AG04450 (cell line): ENCODE measurements at regions of chr1 and their contacts with region 1.

Region 1: DNA sequence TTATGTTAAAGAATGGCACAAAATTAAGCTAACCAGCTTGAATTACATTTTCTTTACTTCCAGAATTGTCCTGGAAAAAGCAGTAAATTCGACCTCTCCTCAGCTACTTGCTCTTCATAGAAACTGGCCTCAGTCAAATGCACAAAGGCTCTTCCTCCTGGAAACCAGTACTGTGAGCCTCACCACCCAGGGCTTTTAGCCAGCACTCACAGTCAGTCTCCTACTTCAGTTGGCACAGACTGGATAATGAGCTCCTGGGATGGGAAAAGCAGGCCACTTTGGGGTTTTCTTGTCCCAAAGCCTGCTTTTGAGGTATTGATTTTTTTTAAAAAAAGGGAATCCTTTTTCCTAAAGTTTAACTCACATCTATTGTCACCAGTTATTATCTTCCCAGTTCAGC is 40.4 kb downstream of the SCYL3 start:
- DNase-seq: no peak
- H3K4me3 ChIP-seq: no peak overlapping the region
- H3K27ac ChIP-seq: no peak overlapping the region
- H3K27me3 ChIP-seq: no peaks in the 10 kb centered on the region
- CTCF ChIP-seq: no peak

Region 2: DNA sequence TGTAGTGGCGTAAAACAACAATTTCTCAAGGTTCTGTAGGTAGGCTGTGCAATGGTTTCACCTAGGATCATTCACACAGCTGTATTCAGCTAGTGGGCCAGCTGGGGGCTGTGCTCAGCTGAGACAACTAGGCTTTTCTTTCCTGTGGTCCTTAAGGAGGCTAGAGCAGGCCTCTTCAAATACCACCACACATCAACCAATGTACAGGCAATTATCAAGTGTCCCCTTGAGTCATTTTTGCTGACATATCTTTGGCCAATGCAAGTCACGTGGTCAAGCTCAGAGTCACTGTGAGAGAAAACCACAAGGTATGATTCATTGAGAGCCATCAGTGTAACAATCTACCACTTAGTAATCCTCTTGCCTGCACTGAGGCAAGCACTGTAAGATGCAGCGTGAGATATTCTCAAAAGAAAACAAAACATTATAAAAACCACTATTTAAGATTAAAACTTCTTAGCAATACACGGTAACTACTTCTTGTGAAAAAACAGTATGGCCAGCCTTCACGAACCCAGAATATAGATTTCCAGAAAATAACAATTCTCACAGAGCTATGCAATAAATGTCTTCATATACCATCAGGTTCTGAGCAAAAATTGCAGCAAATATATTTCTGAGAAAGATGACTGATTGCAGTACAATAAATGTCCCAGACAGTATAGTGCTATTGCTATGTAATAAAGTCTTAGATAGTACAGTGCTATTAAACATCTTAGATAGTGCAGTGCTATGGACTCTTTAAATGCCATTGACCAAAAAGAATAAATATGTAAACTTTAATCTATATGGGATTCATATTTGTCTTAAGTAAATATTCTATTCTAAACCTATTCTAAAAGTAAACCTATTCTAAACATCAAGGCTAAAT is 541.0 kb before region 1 on chr1:
- CTCF ChIA-PET with region 1: interaction called, 16 read pairs
- POLR2A ChIA-PET with region 1: no interaction called
- DNase-seq: peak; percentile 77
- H3K4me3 ChIP-seq: no peak overlapping the region
- H3K27ac ChIP-seq: peak overlapping the region; percentile 34
- H3K27me3 ChIP-seq: no peaks in the 10 kb centered on the region
- CTCF ChIP-seq: no peak

Region 3: GRCh38 chr1:169572187-169572586 is 281.2 kb before region 1 on chr1:
- CTCF ChIA-PET with region 1: no interaction called
- POLR2A ChIA-PET with region 1: no interaction called
- DNase-seq: no peak
- H3K4me3 ChIP-seq: no peak overlapping the region
- H3K27ac ChIP-seq: no peak overlapping the region
- H3K27me3 ChIP-seq: peaks cover 2% of the 10 kb centered on the region
- CTCF ChIP-seq: no peak

Region 4: GRCh38 chr1:169964206-169964605 is 110.9 kb after region 1 on chr1:
- CTCF ChIA-PET with region 1: no interaction called
- POLR2A ChIA-PET with region 1: no interaction called
- DNase-seq: no peak
- H3K4me3 ChIP-seq: no peak overlapping the region
- H3K27ac ChIP-seq: no peak overlapping the region
- H3K27me3 ChIP-seq: no peaks in the 10 kb centered on the region
- CTCF ChIP-seq: no peak